ENCODE measurements at regions of chr1 and their contacts with region 1.

Region 1: DNA sequence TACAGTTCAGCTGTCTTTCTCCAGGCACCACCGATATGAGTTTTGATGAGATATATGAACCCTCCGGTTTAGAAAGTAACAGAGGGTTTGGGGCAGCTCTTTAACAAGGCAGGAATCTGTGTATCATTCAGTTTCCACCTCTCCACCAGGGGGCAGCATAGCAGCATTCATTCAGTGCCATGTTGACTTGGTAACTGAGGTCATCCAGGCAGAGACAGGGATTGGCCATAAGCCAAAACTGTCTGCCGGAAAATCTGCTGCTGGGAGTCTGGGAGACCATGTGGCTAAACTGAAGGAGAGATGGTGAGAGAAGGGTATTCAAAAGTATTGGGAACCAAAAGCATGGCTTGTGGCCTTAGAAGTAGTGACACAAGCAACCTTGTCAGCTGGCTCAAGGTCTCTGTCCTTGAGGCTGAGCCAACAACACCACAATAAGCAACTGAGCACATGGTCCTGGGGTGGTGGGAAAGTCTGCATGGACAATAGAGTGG is 98.5 kb downstream of the LMX1A start:
- DNase-seq: peak; percentile 75 to 90
- H3K4me3 ChIP-seq: no peak overlapping the region
- CTCF ChIP-seq: peak in 1 of 3 donors; percentile 23
- POLR2A ChIP-seq: no peak

Region 2: GRCh38 chr1:165179306-165179705 is 78.7 kb before region 1 on chr1:
- intact Hi-C with region 1: no loop called
- DNase-seq: no peak
- H3K4me3 ChIP-seq: no peak overlapping the region
- CTCF ChIP-seq: no peak
- POLR2A ChIP-seq: no peak

Region 3: DNA sequence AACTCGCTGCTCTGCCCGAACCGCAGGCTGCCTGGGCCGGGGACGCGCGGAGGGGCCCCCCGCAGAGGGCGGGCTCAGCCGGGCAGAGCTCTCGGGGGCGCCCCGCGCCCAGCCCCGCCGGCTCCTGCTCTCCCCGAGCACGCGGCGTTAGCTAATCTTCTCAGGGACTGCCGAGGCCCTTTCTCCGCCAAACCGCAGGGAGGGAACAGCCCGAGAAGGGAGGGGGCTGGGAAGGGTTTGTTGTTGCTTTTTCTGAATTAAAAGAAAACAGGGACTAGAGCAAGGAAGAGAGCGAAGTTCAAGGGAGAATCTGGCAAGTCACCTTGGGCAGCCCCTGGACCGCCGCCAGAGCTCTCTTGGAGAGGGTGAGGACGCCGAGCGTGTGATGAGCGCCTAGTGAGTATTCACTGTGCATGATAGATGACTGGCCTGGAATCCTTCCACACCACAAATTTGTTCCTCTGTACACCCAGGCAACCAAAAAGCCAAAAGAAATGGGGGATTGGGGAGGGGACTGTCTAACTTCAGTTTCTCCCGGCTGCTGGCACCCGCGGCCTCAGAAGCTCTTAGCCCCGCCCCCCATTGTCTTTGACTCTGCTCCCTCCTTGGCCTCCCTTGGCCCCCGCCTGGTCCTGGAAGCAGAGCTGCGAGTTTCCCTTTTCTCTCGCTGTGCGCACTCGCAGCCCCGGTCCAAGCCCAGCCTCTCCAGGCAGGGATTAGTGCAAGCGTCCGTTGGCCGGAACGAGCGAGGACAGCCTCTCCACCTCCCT is 118.2 kb after region 1 on chr1:
- intact Hi-C with region 1: loop called (anchors 10 kb)
- DNase-seq: peak; percentile 85 to 97
- H3K4me3 ChIP-seq: no peak overlapping the region
- CTCF ChIP-seq: no peak
- POLR2A ChIP-seq: no peak

Region 4: DNA sequence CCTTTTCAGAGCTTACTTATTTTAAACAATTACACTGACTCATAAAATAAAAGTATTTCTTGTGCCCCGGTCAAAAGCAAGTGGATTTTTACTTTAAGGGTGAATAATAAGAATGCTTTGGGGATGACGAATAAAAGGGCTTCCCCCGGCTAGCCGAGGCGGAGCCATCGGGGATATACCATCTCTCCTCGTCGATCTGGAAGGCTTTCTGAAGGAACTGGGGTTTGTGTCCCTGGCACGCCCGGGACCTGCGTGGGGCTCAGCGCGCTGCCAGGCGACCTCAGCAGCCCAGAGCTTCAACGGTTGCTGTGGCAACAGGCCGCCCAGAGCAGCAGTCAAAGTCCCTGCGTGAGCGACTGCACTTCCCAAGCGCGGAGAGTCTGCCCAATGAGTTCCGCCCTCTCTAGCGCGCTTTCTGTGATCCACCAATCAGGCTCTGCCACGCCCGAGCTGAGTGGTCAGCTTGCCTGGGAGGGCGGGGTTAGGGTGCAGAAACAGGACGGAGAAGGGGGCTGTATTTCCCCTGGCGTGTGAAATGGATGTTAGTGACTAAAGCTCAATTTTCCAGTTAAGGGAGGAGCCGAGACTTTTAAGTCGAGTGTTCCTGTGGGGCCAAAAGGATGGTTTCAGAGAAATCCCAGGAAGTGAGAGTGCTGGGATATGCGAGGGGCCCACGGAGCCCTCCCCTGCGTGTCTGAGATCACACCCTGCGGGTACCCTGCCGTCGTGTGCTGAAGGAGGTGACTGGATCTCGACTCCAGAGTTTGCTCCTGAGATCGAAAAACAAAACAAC is 340.1 kb after region 1 on chr1:
- intact Hi-C with region 1: loop called (anchors 10 kb)
- DNase-seq: peak; percentile 94 to 98
- H3K4me3 ChIP-seq: peak overlapping the region; percentile 19
- CTCF ChIP-seq: no peak
- POLR2A ChIP-seq: no peak

Region 5: GRCh38 chr1:165928075-165928731 is 670.2 kb after region 1 on chr1:
- intact Hi-C with region 1: no loop called
- DNase-seq: peak in 1 of 2 donors; percentile 82
- H3K4me3 ChIP-seq: no peak overlapping the region
- CTCF ChIP-seq: peak in 1 of 3 donors; percentile 25
- POLR2A ChIP-seq: no peak

Measured in lower leg skin (tissue), 4 donors.